ENCODE measurements at regions of chr12 and their contacts with region 1.

Region 1: DNA sequence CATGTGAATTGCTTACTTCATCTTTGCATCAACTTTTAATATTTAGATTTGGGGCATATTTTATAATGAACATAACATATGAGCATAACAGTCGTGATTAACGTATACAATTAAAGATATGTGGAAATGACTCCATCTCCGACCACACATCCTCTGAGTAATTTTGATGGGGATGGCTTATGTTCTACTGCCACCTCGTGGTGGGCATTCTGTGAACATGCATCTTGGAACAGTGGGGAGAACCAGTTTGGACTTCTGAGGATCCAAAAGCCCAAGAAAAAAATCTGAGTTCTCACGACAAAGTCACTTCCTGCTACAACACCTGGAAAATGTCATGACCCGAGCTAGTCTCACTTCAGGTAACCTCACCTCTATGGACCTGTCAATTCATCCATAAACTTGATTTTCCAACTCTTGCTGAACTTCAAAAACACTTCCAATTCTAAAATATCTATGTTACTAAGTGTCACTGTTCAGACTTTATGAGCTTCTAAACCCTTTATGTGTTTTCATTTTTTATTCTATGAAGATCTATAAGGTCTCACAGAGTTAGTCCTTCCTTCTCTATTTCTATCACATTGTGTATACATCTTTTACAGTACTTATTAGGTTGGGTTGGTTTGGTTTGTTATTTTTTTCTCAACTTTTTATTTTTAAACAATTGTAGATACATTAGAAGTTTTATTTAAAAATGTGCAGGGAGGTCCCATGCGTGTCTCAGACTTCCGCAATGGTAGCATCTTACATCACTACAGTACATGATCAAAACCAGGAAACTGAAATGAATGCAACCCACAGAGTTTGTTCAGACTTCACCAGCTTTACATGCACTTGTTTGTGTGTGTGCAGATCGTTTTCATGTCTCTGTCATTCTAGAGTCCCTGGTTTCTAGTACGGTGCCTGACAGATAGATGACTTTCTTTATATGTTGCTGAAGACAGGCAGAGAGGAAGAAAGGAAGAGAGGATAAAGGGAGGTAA is 38.2 kb upstream of the STAB2 start:
- DNase-seq: no peak
- H3K4me3 ChIP-seq: no peak overlapping the region
- H3K27ac ChIP-seq: no peak overlapping the region
- H3K4me1 ChIP-seq: peaks cover 0 to 5% (median 0%) of the 10 kb centered on the region in 6 donors
- H3K27me3 ChIP-seq: peaks cover 0 to 22% (median 0%) of the 10 kb centered on the region in 7 donors
- CTCF ChIP-seq: peak; percentile 57 to 83 (median 81)
- POLR2A ChIP-seq: no peak

Region 2: GRCh38 chr12:102406033-102406584 is 1142.8 kb before region 1 on chr12:
- intact Hi-C with region 1: no loop called
- DNase-seq: no peak
- H3K4me3 ChIP-seq: no peak overlapping the region
- H3K27ac ChIP-seq: no peak overlapping the region
- H3K4me1 ChIP-seq: no peaks in the 10 kb centered on the region
- H3K27me3 ChIP-seq: no peaks in the 10 kb centered on the region
- CTCF ChIP-seq: no peak
- POLR2A ChIP-seq: no peak

Region 3: GRCh38 chr12:102885043-102885932 is 663.6 kb before region 1 on chr12:
- intact Hi-C with region 1: loop called (anchors 5 kb)
- DNase-seq: no peak
- H3K4me3 ChIP-seq: no peak overlapping the region
- H3K27ac ChIP-seq: no peak overlapping the region
- H3K4me1 ChIP-seq: no peaks in the 10 kb centered on the region
- H3K27me3 ChIP-seq: peaks cover 0 to 39% (median 4%) of the 10 kb centered on the region in 7 donors
- CTCF ChIP-seq: no peak
- POLR2A ChIP-seq: no peak

Region 4: DNA sequence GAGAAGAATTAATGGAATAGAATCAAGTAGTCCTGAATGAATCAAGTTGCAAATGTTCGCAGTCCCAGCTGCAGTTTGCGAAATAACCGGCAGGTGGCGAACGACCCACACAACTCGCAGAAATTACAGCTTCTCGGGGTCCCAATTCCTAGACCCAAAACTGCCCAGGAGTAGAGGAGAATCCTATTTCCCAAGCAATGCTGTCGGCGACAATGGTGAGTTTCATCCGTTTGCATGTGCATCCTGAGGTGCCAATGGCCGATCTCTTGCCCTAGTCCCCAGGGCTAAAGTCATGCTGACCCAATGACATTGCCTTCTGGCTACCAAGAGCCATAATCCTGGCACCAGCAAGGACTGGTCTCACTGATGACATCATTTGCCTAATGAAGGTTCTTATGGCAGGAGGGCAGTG is 600.0 kb before region 1 on chr12:
- intact Hi-C with region 1: loop called (anchors 2 kb)
- DNase-seq: no peak
- H3K4me3 ChIP-seq: no peak overlapping the region
- H3K27ac ChIP-seq: no peak overlapping the region
- H3K4me1 ChIP-seq: peaks cover 0 to 19% (median 13%) of the 10 kb centered on the region in 6 donors
- H3K27me3 ChIP-seq: peaks cover 0 to 69% (median 40%) of the 10 kb centered on the region in 7 donors
- CTCF ChIP-seq: peak; percentile 61 to 90 (median 81)
- POLR2A ChIP-seq: no peak

Measured in spleen (tissue), 13 donors.